ENCODE measurements at regions of chr1 and their contacts with region 1.

Region 1: DNA sequence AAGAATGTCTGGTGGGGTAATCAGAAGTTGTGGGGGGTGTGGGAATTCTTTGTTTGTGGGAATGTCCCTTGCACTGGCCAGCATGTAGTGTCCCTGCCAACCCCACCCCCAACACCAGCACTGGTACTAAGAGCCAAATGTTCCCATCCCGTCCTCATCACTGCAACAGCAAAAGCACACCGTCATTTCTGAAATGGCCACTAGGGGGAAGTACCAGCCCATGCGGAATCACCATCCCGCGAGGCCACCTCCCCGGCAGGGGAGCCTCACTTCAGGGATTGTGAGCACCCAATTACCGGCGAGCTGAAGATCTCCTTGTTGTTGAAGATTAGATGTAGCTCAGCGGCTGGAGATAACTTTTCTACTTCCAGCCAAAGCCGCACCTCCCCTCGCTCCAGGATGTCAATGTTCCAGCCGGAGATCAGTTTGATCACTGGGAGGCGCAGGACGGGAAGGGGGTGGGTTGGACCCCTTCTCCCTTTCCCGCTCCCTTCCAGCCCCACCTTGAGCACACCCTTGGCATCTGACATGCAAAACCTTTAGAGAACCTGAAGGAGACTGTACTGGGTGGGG is 41.0 kb downstream of the MYOM3 start:
- DNase-seq: peak; percentile 85
- ATAC-seq: peak; percentile 91
- H3K4me3 Mint-ChIP-seq: peak overlapping the region; percentile 50
- H3K27ac Mint-ChIP-seq: no peak overlapping the region
- H3K4me1 Mint-ChIP-seq: peaks cover 6% of the 10 kb centered on the region; the same call in 1 of the 2 replicates
- H3K27me3 Mint-ChIP-seq: no peaks in the 10 kb centered on the region; the same call in 1 of the 2 replicates
- CTCF ChIP-seq: peak; percentile 77

Region 2: GRCh38 chr1:24018611-24019580 is 52.0 kb before region 1 on chr1:
- CTCF ChIA-PET with region 1: no interaction called
- POLR2A ChIA-PET with region 1: no interaction called
- DNase-seq: peak; percentile 60
- ATAC-seq: peak; percentile 76
- H3K4me3 Mint-ChIP-seq: no peak overlapping the region
- H3K27ac Mint-ChIP-seq: no peak overlapping the region
- H3K4me1 Mint-ChIP-seq: peaks cover 26% of the 10 kb centered on the region
- H3K27me3 Mint-ChIP-seq: no peaks in the 10 kb centered on the region
- CTCF ChIP-seq: no peak

Region 3: GRCh38 chr1:24060118-24060881 is 10.6 kb before region 1 on chr1:
- CTCF ChIA-PET with region 1: interaction called, 11 read pairs
- POLR2A ChIA-PET with region 1: interaction called, 3 read pairs
- DNase-seq: no peak
- ATAC-seq: no peak
- H3K4me3 Mint-ChIP-seq: no peak overlapping the region
- H3K27ac Mint-ChIP-seq: no peak overlapping the region
- H3K4me1 Mint-ChIP-seq: no peaks in the 10 kb centered on the region
- H3K27me3 Mint-ChIP-seq: no peaks in the 10 kb centered on the region; the same call in 1 of the 2 replicates
- CTCF ChIP-seq: no peak

Region 4: GRCh38 chr1:24094554-24094953 is 23.6 kb after region 1 on chr1:
- CTCF ChIA-PET with region 1: interaction called, 16 read pairs
- POLR2A ChIA-PET with region 1: no interaction called
- DNase-seq: peak; percentile 35
- ATAC-seq: peak; percentile 78
- H3K4me3 Mint-ChIP-seq: no peak overlapping the region
- H3K27ac Mint-ChIP-seq: peak overlapping the region; percentile 25; the same call in 1 of the 2 replicates
- H3K4me1 Mint-ChIP-seq: peaks cover 9% of the 10 kb centered on the region
- H3K27me3 Mint-ChIP-seq: no peaks in the 10 kb centered on the region
- CTCF ChIP-seq: no peak

Region 5: DNA sequence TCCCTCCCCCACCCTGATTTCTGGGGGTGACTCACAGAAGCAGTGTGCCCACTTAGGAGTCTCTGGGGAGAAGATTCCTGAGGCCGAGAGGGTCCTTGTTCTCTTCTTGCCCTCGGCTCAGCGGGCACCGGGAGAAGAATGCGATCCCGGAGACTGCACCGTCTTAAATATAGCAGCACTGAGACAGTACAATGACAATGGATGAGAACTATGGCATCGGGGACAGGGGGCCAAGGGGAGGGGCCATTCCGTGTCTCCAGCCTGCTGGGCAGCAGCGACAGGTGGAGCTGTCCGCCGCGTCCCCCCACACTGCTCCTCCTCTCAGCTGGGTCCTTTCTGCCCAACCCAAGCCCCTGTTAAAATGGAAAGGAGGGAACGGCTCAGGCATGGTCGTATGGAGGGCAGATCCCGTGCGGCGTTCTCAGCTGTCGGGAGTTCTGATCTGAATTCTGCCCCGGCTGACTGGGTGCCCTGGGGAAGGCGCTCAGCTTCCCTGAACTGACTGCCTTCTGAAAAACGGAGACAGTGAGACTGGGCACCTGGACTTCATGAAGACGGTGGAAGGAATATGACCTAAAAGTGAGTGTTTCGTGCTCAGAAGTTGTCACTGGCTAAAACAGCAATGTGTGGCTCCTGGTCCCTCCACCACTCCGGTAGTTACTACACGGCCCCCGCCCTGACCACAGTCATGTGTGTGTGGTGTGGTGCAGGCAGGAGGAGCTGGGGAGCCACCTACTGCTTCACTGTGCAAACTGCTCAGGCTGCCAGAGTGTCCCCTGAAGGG is 41.3 kb after region 1 on chr1 and contains the start of gene MYOM3:
- CTCF ChIA-PET with region 1: interaction called, 31 read pairs
- POLR2A ChIA-PET with region 1: no interaction called
- DNase-seq: peak; percentile 65
- ATAC-seq: peak; percentile 88
- H3K4me3 Mint-ChIP-seq: peak within 1 kb of the TSS; percentile 29
- H3K27ac Mint-ChIP-seq: no peak within 1 kb of the TSS; the same call in none of the 2 replicates
- H3K4me1 Mint-ChIP-seq: peaks cover 32% of the 10 kb centered on the region
- H3K27me3 Mint-ChIP-seq: no peaks in the 10 kb centered on the region
- CTCF ChIP-seq: no peak
- total RNA-seq, gene MYOM3: 0.13 to 0.16 TPM (median 0.14 TPM) in 3 replicates

Region 6: GRCh38 chr1:24186993-24187805 is 116.3 kb after region 1 on chr1 and contains the start of gene IFNLR1:
- CTCF ChIA-PET with region 1: interaction called, 10 read pairs
- POLR2A ChIA-PET with region 1: no interaction called
- DNase-seq: peak; percentile 80
- ATAC-seq: peak; percentile 87
- H3K4me3 Mint-ChIP-seq: peak within 1 kb of the TSS; percentile 78
- H3K27ac Mint-ChIP-seq: peak within 1 kb of the TSS; percentile 79
- H3K4me1 Mint-ChIP-seq: peaks cover 22% of the 10 kb centered on the region
- H3K27me3 Mint-ChIP-seq: no peaks in the 10 kb centered on the region; the same call in 1 of the 2 replicates
- CTCF ChIP-seq: no peak
- total RNA-seq, gene IFNLR1: 6.6 to 7.9 TPM (median 7.7 TPM) in 3 replicates